ENCODE measurements at regions of chr1 and their contacts with region 1.

Region 1: GRCh38 chr1:39973503-39974135 is 18.7 kb downstream of the MFSD2A start:
- DNase-seq: peak; percentile 84
- H3K4me3 Mint-ChIP-seq: no peak overlapping the region
- H3K27ac Mint-ChIP-seq: no peak overlapping the region
- H3K4me1 Mint-ChIP-seq: no peaks in the 10 kb centered on the region
- H3K27me3 Mint-ChIP-seq: no peaks in the 10 kb centered on the region

Region 2: DNA sequence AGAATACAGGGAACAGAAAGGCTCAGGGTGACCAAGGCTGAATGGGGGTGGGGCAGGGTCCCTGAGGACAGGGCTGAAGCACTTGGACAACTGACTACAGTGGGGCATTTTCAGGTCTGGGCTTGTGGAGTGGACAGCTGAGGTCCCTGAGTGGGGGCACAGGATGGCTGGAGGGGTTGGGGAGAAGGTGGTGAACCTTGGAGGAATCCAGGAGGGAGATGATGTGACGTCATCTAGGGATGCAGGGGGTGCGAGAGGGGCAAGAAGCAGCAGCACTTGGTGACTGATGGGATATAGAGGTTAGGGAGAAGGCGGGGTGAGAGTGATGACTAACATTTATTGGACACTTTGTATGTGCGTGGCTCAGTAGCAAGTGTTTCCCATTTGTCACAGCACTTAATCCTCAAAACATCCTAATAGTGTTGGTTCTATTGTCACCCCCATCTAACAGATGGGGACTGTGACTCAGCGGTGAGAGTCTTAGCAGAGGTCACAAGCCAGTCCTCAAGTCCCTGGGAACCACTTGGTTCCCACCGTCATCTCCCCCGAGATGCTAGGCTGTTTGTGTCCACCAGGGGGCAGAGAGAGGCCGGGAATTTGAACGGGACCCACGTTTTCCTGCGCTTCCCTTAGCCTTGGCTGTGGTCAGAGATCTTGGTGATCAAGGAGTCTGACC is 157.1 kb before region 1 on chr1:
- CTCF ChIA-PET with region 1: interaction called, 45 read pairs
- intact Hi-C with region 1: loop called (anchors 1 kb)
- DNase-seq: peak; percentile 73
- H3K4me3 Mint-ChIP-seq: peak overlapping the region; percentile 15
- H3K27ac Mint-ChIP-seq: no peak overlapping the region
- H3K4me1 Mint-ChIP-seq: peaks cover 10% of the 10 kb centered on the region
- H3K27me3 Mint-ChIP-seq: peaks cover 3% of the 10 kb centered on the region

Region 3: DNA sequence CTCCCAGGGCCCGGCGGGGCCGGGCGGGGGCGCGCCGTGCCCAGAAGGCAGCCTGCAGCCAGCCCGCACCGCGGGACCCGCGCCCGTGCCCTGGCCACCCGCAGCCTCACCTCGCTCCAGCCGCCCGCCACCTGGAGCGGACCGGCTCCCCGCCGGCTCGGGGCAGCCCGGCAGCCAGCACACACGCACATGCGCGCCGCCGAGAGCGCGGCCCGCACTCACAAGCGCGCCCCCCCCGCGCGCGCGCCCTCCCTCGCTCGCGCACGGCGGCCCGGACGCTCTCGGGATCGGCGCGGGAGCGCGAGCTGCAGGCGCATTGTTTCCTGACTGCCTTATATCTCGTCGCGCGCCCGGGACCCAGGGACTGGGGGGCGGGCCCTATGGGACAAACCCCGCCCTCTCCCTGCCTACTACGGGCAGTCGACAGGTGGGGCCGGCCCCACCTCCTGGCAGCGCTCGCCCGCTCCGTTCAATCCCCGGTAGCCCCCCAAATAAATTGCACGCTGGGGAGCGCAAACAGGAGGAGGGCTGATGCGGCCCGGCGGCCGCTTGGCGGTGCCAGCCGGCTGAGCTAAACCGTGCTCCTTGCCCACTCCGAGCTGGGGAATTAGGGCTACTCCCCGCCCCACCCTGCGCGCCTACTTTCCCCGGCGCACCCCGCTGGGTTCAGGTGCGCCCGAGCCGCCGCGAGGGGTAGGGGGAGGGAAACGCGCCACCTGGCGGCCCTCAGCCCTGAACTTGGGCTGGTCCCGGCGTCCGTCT is 71.7 kb before region 1 on chr1 and contains the start of gene MYCL:
- CTCF ChIA-PET with region 1: interaction called, 13 read pairs
- intact Hi-C with region 1: loop called (anchors 1 kb)
- DNase-seq: peak; percentile 73
- H3K4me3 Mint-ChIP-seq: peak within 1 kb of the TSS; percentile 65
- H3K27ac Mint-ChIP-seq: no peak within 1 kb of the TSS
- H3K4me1 Mint-ChIP-seq: peaks cover 8% of the 10 kb centered on the region
- H3K27me3 Mint-ChIP-seq: peaks cover 46% of the 10 kb centered on the region
- total RNA-seq, gene MYCL: 0.19 TPM in 1 of 2 experiments, not detected in the other

Region 4: GRCh38 chr1:39919545-39919944 is 54.1 kb before region 1 on chr1:
- CTCF ChIA-PET with region 1: interaction called, 182 read pairs
- intact Hi-C with region 1: loop called (anchors 1 kb)
- DNase-seq: peak; percentile 61
- H3K4me3 Mint-ChIP-seq: no peak overlapping the region
- H3K27ac Mint-ChIP-seq: no peak overlapping the region
- H3K4me1 Mint-ChIP-seq: peaks cover 2% of the 10 kb centered on the region
- H3K27me3 Mint-ChIP-seq: no peaks in the 10 kb centered on the region

Region 5: DNA sequence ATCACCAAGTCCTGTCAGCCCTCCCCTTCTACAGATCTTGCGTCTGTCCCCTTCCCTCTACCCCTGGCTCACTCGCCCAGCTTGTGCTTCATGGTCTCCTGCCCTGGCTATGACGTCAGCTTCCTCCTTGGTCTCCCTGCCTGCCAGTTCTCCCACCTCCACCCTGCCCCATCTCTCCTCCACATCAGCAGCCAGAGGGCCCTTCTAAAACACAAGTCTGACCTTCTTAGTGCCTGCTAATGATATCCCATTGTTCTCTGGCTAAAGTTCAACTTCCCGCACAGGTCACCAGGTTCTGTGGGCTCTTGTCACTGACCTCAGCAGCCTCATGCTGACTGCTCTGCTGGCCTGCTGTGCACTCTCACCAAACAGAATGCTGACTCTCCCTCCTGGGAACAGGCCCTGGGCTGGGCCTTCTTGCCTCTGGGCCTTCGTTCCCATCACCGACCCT is 47.3 kb before region 1 on chr1:
- CTCF ChIA-PET with region 1: interaction called, 182 read pairs
- intact Hi-C with region 1: no loop called
- DNase-seq: no peak
- H3K4me3 Mint-ChIP-seq: no peak overlapping the region
- H3K27ac Mint-ChIP-seq: no peak overlapping the region
- H3K4me1 Mint-ChIP-seq: no peaks in the 10 kb centered on the region
- H3K27me3 Mint-ChIP-seq: no peaks in the 10 kb centered on the region

Region 6: GRCh38 chr1:40001456-40001855 is 27.8 kb after region 1 on chr1:
- CTCF ChIA-PET with region 1: interaction called, 15 read pairs
- intact Hi-C with region 1: no loop called
- DNase-seq: no peak
- H3K4me3 Mint-ChIP-seq: no peak overlapping the region
- H3K27ac Mint-ChIP-seq: no peak overlapping the region
- H3K4me1 Mint-ChIP-seq: no peaks in the 10 kb centered on the region
- H3K27me3 Mint-ChIP-seq: no peaks in the 10 kb centered on the region

Region 7: GRCh38 chr1:40032240-40032891 is 58.7 kb after region 1 on chr1:
- CTCF ChIA-PET with region 1: interaction called, 22 read pairs
- intact Hi-C with region 1: loop called (anchors 1 kb)
- DNase-seq: peak; percentile 76
- H3K4me3 Mint-ChIP-seq: no peak overlapping the region
- H3K27ac Mint-ChIP-seq: no peak overlapping the region
- H3K4me1 Mint-ChIP-seq: peaks cover 36% of the 10 kb centered on the region
- H3K27me3 Mint-ChIP-seq: no peaks in the 10 kb centered on the region

Region 8: DNA sequence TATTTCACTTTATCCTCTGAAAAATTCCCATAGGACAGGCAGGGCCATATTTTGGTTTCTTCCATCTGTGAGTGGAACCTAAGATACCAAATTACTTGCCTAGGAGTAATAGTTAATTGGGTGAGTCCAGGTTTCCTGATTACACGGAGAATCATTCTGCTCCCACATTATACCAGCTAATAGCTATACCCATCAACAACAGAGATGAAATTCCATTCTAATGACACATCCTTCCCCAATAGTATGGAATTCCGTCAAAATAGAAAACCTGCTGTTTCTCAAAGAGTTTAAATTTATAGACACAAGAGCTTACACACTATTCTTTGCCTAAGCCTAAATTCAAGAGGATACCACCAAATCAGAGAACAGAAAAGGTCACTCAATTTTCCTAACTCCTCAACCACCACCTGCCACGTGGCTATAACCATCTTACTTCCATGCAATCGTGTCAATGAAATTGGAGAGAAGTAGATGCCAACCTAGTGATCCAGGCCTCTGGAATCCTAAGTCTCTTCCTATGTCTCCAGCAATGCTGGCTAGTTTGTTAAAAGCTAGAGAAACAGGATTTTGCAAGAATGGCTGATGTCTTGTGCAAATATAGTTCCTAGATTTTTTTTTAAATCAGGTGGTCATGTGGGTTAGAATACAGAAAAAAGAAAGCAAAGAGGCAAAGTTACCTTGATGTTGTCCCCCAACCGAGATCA is 117.2 kb after region 1 on chr1:
- CTCF ChIA-PET with region 1: no interaction called
- intact Hi-C with region 1: no loop called
- DNase-seq: no peak
- H3K4me3 Mint-ChIP-seq: no peak overlapping the region
- H3K27ac Mint-ChIP-seq: no peak overlapping the region
- H3K4me1 Mint-ChIP-seq: peaks cover 25% of the 10 kb centered on the region
- H3K27me3 Mint-ChIP-seq: no peaks in the 10 kb centered on the region